PC-9 (cell line): ENCODE measurements at regions of chr9 and their contacts with region 1.

Region 1: GRCh38 chr9:92359394-92359995 is 33.7 kb downstream of the CENPP start:
- DNase-seq: no peak
- H3K4me3 ChIP-seq: no peak overlapping the region
- H3K27ac ChIP-seq: no peak overlapping the region
- H3K4me1 ChIP-seq: no peaks in the 10 kb centered on the region
- H3K27me3 ChIP-seq: no peaks in the 10 kb centered on the region
- CTCF ChIP-seq: no peak

Region 2: GRCh38 chr9:92373167-92373566 is 13.7 kb after region 1 on chr9:
- CTCF ChIA-PET with region 1: no interaction called
- POLR2A ChIA-PET with region 1: no interaction called
- intact Hi-C with region 1: no loop called
- DNase-seq: no peak
- H3K4me3 ChIP-seq: no peak overlapping the region
- H3K27ac ChIP-seq: no peak overlapping the region
- H3K4me1 ChIP-seq: no peaks in the 10 kb centered on the region
- H3K27me3 ChIP-seq: no peaks in the 10 kb centered on the region
- CTCF ChIP-seq: no peak

Region 3: GRCh38 chr9:92393686-92394085 is 34.2 kb after region 1 on chr9:
- CTCF ChIA-PET with region 1: no interaction called
- POLR2A ChIA-PET with region 1: no interaction called
- intact Hi-C with region 1: no loop called
- DNase-seq: no peak
- H3K4me3 ChIP-seq: no peak overlapping the region
- H3K27ac ChIP-seq: no peak overlapping the region
- H3K4me1 ChIP-seq: no peaks in the 10 kb centered on the region
- H3K27me3 ChIP-seq: no peaks in the 10 kb centered on the region
- CTCF ChIP-seq: no peak

Region 4: DNA sequence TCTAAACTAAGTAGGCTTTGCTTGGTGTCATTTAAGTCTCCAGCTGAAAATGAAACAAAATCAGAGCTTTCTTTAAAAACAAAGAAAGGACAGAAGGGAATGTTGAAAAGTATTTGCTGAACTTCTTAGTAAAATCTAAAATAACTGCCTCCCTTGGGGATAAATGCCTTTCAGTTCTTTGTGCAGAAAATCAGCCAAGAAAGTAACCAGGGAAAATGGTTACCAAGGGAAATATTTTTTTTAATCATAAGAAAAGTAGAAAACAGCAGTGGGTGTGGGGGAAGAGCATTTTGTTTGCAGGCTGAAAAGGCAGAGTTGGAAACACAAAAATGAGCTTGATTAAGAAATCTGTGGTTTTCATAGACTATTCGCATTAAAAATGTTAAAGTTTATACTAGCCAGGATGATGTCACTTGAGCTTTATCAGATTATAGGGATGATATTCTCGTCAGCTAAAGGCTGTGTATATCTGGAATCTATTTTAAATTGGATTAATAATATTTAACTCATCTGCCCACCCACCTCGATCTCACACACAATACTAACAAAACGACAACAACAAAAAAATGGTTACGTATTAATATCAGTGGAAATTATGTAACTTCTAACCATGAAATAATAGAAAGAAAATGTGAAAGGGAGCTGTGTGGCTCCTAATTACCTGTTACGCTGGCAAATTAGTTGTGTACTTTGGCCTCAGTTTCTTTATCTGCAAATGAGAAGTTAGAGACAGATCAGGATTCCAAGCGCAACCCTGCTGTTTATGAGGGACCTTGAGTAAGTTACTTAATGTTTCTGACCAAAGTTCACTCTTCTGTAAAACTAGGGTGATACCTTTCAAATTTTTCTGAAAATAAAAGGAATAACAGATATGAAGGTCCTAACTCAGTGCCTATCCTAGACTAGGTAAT is 176.7 kb after region 1 on chr9 and contains the start of gene ECM2:
- CTCF ChIA-PET with region 1: no interaction called
- POLR2A ChIA-PET with region 1: interaction called, 13 read pairs
- intact Hi-C with region 1: no loop called
- DNase-seq: no peak
- H3K4me3 ChIP-seq: no peak within 1 kb of the TSS
- H3K27ac ChIP-seq: no peak within 1 kb of the TSS
- H3K4me1 ChIP-seq: no peaks in the 10 kb centered on the region
- H3K27me3 ChIP-seq: no peaks in the 10 kb centered on the region
- CTCF ChIP-seq: no peak
- total RNA-seq, gene ECM2: 1.9 and 3.1 TPM in 2 replicates

Region 5: GRCh38 chr9:92738661-92739081 is 379.2 kb after region 1 on chr9:
- CTCF ChIA-PET with region 1: no interaction called
- POLR2A ChIA-PET with region 1: no interaction called
- intact Hi-C with region 1: no loop called
- DNase-seq: peak in 1 of 2 experiments; percentile 84
- H3K4me3 ChIP-seq: no peak overlapping the region
- H3K27ac ChIP-seq: no peak overlapping the region
- H3K4me1 ChIP-seq: no peaks in the 10 kb centered on the region
- H3K27me3 ChIP-seq: no peaks in the 10 kb centered on the region
- CTCF ChIP-seq: no peak

Region 6: DNA sequence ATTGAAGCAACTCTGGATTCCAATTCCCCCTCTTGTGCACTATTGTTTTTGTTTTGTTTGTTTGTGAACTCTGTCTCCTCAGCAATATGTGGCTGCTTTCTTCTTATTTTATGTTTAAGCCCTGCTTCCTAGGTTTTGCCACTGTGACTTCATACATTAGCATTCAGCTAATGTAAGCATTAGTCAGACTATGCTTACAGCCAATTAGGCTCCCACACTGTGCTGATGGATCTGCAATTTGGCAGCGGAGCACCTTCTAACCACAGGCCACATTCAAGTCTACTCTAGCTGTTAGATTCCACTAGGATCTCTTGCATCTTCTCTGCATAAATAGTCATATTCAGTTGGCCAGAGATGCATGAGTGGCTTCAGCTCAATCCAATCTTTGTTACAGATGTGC is 414.8 kb after region 1 on chr9:
- CTCF ChIA-PET with region 1: interaction called, 16 read pairs
- POLR2A ChIA-PET with region 1: no interaction called
- intact Hi-C with region 1: no loop called
- DNase-seq: peak; percentile 22 to 78
- H3K4me3 ChIP-seq: no peak overlapping the region
- H3K27ac ChIP-seq: no peak overlapping the region
- H3K4me1 ChIP-seq: no peaks in the 10 kb centered on the region
- H3K27me3 ChIP-seq: no peaks in the 10 kb centered on the region
- CTCF ChIP-seq: no peak